ENCODE measurements at regions of chr10 and their contacts with region 1.

Region 1: DNA sequence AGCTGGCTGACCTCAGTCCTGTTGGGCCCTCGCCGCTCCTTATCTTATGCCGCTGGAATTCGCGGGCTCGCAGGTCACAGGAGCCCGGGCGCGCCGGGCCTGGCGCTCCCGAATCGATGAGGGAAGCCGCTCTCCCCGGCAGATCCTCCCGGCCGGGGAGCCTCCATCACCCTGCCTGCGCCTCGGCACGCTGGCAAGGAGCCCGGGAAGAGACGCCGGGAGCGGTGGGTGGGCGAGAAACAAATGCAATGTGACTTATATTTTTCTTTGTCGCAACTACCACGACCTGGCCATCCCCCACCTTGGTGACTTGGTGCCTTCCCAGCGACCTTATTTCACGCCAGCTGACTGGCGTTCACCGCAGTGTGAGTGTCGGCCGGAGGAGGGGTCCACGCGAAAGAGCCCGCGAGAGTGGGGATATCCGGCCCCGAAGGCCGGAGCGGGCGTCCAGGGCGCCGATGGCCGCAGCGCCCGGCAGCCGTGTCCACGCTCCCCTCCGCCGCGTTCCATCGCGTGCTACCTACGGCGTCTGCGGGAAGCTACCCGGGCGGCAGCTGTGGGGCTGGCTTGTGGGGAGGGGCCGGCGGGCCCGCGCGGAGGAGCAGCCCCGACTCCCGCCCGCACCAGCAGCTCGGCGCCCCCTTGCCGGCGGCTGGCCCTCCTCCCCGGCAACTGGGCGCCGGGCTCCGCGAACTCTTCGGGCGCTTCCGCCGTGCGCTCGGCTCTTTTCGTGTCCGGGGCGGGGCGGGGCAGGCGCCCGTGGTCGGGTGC is 494 bp upstream of the BMPR1A start:
- DNase-seq: peak; percentile 83 to 98 (median 88)

Region 2: DNA sequence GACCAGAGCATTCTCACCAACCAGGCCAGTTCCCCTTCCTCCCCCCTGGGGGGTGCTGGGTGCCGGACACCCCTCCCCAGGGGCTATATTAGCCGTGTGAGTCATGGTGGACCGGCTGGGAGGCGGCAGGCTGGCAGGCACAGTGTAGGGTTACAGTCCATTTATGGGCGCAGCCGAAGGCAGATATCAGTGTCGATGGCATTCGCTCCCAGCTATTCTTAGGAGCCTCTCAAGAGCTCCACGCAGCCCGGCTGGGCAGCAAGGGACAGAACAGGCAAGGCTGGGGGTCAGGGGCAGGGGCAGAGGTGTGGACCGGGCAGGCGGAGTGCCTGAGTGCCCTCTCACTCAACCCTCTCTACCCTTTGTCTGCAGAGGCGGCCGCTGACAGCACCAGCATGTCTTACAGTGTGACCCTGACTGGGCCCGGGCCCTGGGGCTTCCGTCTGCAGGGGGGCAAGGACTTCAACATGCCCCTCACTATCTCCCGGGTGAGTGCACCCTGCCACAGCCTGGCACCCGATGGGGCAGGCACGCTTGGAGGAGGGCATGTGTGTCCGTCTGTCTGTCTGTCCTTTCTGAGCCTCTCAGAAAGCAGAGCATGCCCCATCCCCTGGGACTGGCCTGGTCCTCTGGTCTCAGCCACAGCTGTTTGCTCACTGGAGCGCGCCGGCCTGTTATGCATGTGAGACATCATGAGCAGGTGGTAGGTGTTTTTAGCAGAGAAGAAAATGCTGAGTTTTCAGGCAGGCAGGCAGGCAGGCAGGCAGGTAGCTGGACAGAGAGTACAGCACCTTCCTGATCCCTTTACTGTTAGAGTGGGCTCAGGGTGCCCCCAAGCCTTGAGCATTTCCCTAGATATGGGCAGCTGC is 87.4 kb before region 1 on chr10 and contains the start of gene LDB3:
- intact Hi-C with region 1: no loop called
- DNase-seq: no peak

Region 3: GRCh38 chr10:86710987-86711512 is 44.9 kb before region 1 on chr10:
- intact Hi-C with region 1: loop called (anchors 1 kb)
- DNase-seq: peak; percentile 69 to 98 (median 84)